Tibial artery (tissue), 4 donors: ENCODE measurements at regions of chr12 and their contacts with region 1.

Region 1: DNA sequence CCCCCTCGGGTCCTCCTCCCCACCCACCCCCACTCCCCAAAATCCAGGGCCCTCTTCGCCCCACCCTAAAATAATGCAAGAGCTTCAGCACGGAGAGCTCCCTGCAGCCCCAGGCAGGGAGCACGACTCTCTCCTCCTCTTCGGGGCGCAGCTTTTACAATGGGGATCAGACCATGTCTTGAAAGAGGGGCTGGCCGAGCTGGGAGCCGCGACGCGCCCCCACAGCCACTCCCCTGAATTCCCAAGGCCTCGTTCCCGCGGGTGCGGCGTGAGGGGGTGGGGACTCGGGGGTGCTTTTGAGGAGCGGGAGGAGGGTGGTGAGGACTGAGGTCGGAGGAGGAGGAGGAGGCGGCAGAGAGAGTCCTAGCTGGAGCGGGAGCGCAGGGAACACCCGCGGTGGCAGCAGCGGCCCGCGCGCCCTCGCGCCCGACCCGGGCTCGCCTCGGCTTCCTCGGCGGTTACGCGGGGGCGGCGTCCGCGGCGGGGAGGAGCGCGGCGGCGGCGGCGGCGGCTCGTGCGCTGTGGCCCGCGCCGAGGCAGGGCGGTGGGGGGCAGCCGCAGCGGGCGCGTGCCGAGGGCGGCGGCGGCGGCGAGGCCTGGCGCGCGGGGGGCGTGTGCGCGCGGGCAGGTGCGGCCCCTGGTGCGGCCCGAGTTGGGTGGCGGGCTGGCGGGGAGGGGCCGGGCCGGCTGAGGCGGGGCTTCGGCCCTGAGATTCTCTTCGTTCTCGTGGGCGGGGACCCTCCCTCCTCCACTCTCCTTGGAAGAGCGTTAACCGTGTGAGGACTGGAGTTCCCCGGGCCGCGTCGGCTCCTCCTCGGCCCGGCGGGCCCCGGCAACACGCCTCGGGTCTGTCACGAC is at the start of gene ANKS1B:
- DNase-seq: peak; percentile 38 to 75
- H3K4me3 ChIP-seq: peak within 1 kb of the TSS; percentile 78 to 84
- H3K27ac ChIP-seq: peak within 1 kb of the TSS; percentile 84 to 88
- H3K4me1 ChIP-seq: peaks cover 0 to 32% (median 6%) of the 10 kb centered on the region in 4 donors
- H3K27me3 ChIP-seq: no peaks in the 10 kb centered on the region
- CTCF ChIP-seq: no peak

Region 2: GRCh38 chr12:99810718-99811593 is 173.5 kb before region 1 on chr12:
- intact Hi-C with region 1: loop called (anchors 10 kb)
- DNase-seq: no peak
- H3K4me3 ChIP-seq: no peak overlapping the region
- H3K27ac ChIP-seq: no peak overlapping the region
- H3K4me1 ChIP-seq: peaks cover 0 to 4% (median 0%) of the 10 kb centered on the region in 4 donors
- H3K27me3 ChIP-seq: no peaks in the 10 kb centered on the region
- CTCF ChIP-seq: peak; percentile 33 to 35